ENCODE measurements at regions of chr2 and their contacts with region 1.

Region 1: GRCh38 chr2:45993476-45993991 is 303.7 kb upstream of the EPAS1 start:
- DNase-seq: peak; percentile 77 to 94
- ATAC-seq: peak; percentile 50 to 67; a peak in 5 of 6 replicates
- H3K4me3 ChIP-seq: no peak overlapping the region
- H3K27ac ChIP-seq: peak overlapping the region; percentile 84 to 89
- H3K4me1 ChIP-seq: peaks cover 31% of the 10 kb centered on the region
- CTCF ChIP-seq: peak; percentile 97
- EP300 ChIP-seq: no peak
- POLR2A ChIP-seq: no peak
- RAD21 ChIP-seq: peak; percentile 96 to 98

Region 2: GRCh38 chr2:45643543-45644542 is 349.7 kb before region 1 on chr2:
- CTCF ChIA-PET with region 1: interaction called, 16 read pairs
- POLR2A ChIA-PET with region 1: no interaction called
- DNase-seq: peak; percentile 61 to 90
- ATAC-seq: peak; percentile 94 to 99
- H3K4me3 ChIP-seq: peak overlapping the region; percentile 63
- H3K27ac ChIP-seq: peak overlapping the region; percentile 89 to 93
- H3K4me1 ChIP-seq: peaks cover 15% of the 10 kb centered on the region
- CTCF ChIP-seq: peak; percentile 99
- EP300 ChIP-seq: no peak
- POLR2A ChIP-seq: no peak
- RAD21 ChIP-seq: peak; percentile 94 to 100

Region 3: GRCh38 chr2:45946023-45946422 is 47.5 kb before region 1 on chr2:
- CTCF ChIA-PET with region 1: interaction called, 15 read pairs
- POLR2A ChIA-PET with region 1: no interaction called
- DNase-seq: peak in 1 of 2 experiments; percentile 53
- ATAC-seq: peak; percentile 54 to 82; a peak in 5 of 6 replicates
- H3K4me3 ChIP-seq: no peak overlapping the region
- H3K27ac ChIP-seq: peak overlapping the region in 1 of 2 experiments; percentile 17; a peak in 1 of 6 replicates
- H3K4me1 ChIP-seq: peaks cover 31% of the 10 kb centered on the region
- CTCF ChIP-seq: no peak
- EP300 ChIP-seq: no peak
- POLR2A ChIP-seq: no peak
- RAD21 ChIP-seq: no peak

Region 4: DNA sequence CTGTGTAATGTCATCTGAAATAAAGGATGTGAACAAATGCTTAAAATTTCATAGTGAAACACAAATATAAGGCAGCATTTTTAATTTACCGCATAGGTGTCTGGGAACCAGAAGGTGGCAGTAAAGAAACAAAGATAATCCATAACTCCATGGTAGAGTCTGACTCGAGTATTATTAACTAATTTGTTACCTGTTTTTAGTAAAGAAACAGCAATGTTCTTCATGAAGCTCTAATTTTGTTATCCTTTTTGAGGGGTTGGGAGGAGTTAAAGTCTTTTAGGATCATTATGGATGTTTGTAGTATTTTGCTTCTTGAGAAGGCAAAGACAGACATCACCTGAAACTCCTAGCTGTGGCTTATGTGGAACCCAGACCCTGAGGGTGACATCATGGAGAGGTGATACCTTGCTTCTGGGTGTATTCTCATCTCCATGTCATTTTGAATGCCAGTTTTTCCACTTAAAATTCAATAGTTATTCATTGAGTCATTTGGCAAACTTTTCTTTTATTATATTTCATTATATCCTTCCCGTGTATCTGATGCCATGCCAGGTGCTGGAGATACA is 17.5 kb after region 1 on chr2:
- CTCF ChIA-PET with region 1: interaction called, 52 read pairs
- POLR2A ChIA-PET with region 1: no interaction called
- DNase-seq: peak; percentile 62 to 72
- ATAC-seq: peak; percentile 73 to 92; a peak in 5 of 6 replicates
- H3K4me3 ChIP-seq: no peak overlapping the region
- H3K27ac ChIP-seq: peak overlapping the region; percentile 12 to 56; a peak in 4 of 6 replicates
- H3K4me1 ChIP-seq: peaks cover 19% of the 10 kb centered on the region
- CTCF ChIP-seq: peak; percentile 96
- EP300 ChIP-seq: no peak
- POLR2A ChIP-seq: no peak
- RAD21 ChIP-seq: peak; percentile 94 to 98

Region 5: GRCh38 chr2:46306330-46306751 is 312.8 kb after region 1 on chr2:
- CTCF ChIA-PET with region 1: interaction called, 11 read pairs
- POLR2A ChIA-PET with region 1: no interaction called
- DNase-seq: peak in 1 of 2 experiments; percentile 83
- ATAC-seq: peak; percentile 27 to 38; a peak in 4 of 6 replicates
- H3K4me3 ChIP-seq: no peak overlapping the region
- H3K27ac ChIP-seq: peak overlapping the region; percentile 71 to 92
- H3K4me1 ChIP-seq: peaks cover 100% of the 10 kb centered on the region
- CTCF ChIP-seq: no peak
- EP300 ChIP-seq: peak; percentile 84 to 89; a peak in 3 of 5 replicates
- POLR2A ChIP-seq: no peak
- RAD21 ChIP-seq: peak in 1 of 2 experiments; percentile 32; a peak in 1 of 5 replicates

Region 6: DNA sequence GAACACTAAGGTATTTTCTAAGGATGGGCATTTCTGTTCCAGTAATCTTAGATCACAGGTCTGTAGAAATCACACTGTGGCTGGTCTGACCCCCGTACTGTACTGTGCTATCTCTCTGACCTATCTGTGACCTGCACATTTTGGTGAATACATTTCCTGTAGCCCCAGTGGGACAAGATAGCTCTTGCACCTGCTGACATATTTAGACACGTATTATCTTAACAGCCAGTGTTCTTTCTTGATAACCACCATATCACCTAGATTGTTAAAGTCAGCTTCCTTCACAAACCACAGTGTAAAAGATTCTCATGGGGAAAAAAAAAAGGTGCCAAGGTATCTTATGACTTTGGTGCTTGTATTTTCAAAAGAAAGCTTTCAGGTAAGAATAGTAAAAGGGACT is 446.0 kb after region 1 on chr2:
- CTCF ChIA-PET with region 1: interaction called, 13 read pairs
- POLR2A ChIA-PET with region 1: no interaction called
- DNase-seq: no peak
- ATAC-seq: no peak
- H3K4me3 ChIP-seq: no peak overlapping the region
- H3K27ac ChIP-seq: no peak overlapping the region
- H3K4me1 ChIP-seq: no peaks in the 10 kb centered on the region; the same call in 2 of the 3 replicates
- CTCF ChIP-seq: no peak
- EP300 ChIP-seq: no peak
- POLR2A ChIP-seq: no peak
- RAD21 ChIP-seq: no peak